Esophagus muscularis mucosa (tissue), 4 donors: ENCODE measurements at regions of chr6 and their contacts with region 1.

Region 1: GRCh38 chr6:124870611-124871459 is 91.4 kb upstream of the RNF217 start:
- DNase-seq: no peak
- H3K4me3 ChIP-seq: no peak overlapping the region
- H3K27ac ChIP-seq: no peak overlapping the region
- H3K4me1 ChIP-seq: peaks cover 0 to 10% (median 5%) of the 10 kb centered on the region in 4 donors
- H3K27me3 ChIP-seq: no peaks in the 10 kb centered on the region
- CTCF ChIP-seq: peak; percentile 64 to 73 (median 68)
- EP300 ChIP-seq: no peak
- POLR2A ChIP-seq: no peak

Region 2: GRCh38 chr6:124961777-124962611 is 91.2 kb after region 1 on chr6 and contains the start of gene RNF217:
- intact Hi-C with region 1: loop called (anchors 5 kb)
- DNase-seq: no peak
- H3K4me3 ChIP-seq: peak within 1 kb of the TSS; percentile 79 to 91 (median 86)
- H3K27ac ChIP-seq: peak within 1 kb of the TSS; percentile 93 to 98 (median 96)
- H3K4me1 ChIP-seq: peaks cover 0 to 45% (median 39%) of the 10 kb centered on the region in 4 donors
- H3K27me3 ChIP-seq: no peaks in the 10 kb centered on the region
- CTCF ChIP-seq: peak in 1 of 3 experiments; percentile 26
- EP300 ChIP-seq: no peak
- POLR2A ChIP-seq: no peak
- total RNA-seq, gene RNF217: 20.0 to 34.9 (median 23.2) TPM

Region 3: DNA sequence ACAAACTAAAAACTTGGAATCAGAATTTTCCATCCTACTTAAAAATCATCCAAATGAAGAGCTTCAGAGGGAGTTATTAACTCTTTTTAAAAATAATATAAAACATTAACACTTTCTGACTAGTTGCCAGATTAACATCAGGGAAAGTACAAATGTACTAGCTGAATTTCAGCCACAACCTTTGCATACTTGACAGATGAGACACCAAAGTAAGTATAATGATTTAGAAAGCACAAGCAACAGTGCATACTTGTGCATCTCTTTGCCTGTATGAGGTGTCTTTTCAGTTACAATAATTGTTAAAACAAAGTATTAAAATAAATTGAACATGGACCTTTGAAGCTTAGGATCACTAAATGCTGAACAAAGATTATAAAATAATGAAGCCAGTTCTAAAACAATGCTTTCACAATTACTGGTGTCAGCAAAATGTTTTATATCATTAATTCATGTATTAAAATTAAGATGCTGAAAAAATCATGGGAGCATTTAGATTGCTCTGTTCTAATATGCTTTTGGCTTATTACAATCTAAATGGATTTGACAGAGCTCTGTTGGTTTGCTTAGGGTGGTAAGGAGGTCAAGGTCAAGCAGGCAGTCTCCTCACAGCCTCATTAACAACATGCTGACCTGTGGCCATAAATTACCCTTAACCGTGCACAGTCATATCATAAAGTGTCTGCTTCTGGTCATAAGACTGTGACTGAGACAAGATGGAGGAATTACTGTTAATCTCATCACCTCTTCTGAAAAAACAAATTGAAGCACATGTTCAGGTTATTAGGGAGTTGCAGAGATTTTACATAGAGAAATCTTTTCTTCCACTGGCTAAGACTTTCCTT is 106.5 kb after region 1 on chr6:
- intact Hi-C with region 1: no loop called
- DNase-seq: no peak
- H3K4me3 ChIP-seq: no peak overlapping the region
- H3K27ac ChIP-seq: no peak overlapping the region
- H3K4me1 ChIP-seq: peaks cover 0 to 18% (median 13%) of the 10 kb centered on the region in 4 donors
- H3K27me3 ChIP-seq: no peaks in the 10 kb centered on the region
- CTCF ChIP-seq: no peak
- EP300 ChIP-seq: no peak
- POLR2A ChIP-seq: no peak

Region 4: DNA sequence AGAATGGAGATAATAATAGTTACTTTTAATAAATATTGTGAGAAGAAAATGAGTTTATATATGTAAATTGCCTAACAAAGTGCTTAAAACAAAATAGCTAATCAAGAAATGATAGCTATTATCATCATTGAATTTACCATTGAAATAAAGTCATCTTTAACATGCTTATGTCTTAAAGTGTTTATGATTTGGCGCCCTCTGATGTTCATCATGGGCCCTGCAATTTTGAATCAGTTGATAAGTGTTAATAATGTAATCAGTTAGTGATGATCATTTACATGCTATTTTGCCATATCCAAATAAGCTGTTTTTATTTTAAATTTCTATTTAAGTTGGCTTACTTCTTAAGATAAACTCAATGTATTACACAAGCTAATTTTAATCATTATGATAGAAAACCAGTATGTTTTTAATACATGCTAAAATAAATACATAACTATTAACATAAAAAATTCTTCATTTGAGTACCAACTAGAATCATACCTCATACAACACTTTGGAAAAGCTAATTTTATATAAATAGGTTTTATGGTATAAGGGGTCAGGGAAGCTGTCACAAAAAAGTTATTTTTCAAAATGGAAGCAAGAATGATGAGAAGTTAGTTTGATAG is 243.5 kb after region 1 on chr6:
- intact Hi-C with region 1: loop called (anchors 2 kb)
- DNase-seq: no peak
- H3K4me3 ChIP-seq: no peak overlapping the region
- H3K27ac ChIP-seq: no peak overlapping the region
- H3K4me1 ChIP-seq: no peaks in the 10 kb centered on the region
- H3K27me3 ChIP-seq: no peaks in the 10 kb centered on the region
- CTCF ChIP-seq: peak; percentile 82 to 91 (median 85)
- EP300 ChIP-seq: no peak
- POLR2A ChIP-seq: no peak